Activated CD4-positive, alpha-beta memory T cell treated with anti-CD3 and anti-CD28 coated beads, Interleukin-2, amount 10 ng/mL, durations not matched to agents 7 days and 5 days (primary cell): ENCODE measurements at regions of chr3 and their contacts with region 1.

Region 1: DNA sequence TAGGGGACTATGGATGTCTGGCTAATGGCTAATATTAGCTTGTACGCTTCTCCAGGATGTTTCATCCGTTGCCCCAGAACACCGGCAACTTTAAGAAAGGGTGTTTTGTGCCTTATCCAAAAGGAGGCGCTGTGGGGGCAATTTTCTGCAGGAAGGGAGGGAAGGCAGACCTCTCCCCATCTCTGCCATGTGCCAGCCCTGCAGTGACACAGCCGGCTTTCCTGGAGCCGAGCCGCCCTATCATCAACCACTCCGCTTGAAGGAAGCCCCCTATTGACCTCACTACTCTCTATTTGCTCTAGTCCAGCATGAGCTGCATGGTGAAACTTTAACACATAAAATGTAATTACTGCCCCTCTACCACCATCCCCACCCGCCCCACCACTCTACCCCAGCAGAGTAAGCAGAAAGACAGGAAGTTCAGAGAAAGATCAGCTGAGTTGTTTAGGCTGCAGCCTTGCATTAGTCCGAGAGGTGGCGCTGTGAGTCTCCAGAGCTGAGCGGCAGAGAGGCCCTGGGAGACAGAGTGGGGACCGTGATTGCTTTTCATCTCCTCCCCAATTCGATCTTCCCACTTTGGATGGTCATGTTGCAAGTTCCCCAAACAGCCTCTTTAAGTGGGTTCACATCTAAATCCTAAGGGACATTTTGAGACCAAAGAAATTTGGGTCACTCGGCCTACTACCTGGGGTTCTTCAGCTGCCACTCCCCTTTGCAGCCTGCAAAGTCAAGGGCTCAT is 24.5 kb upstream of the RAD18 start:
- DNase-seq: peak; percentile 70
- H3K4me3 Mint-ChIP-seq: no peak overlapping the region
- H3K27ac Mint-ChIP-seq: no peak overlapping the region
- H3K4me1 Mint-ChIP-seq: peaks cover 2% of the 10 kb centered on the region
- H3K27me3 Mint-ChIP-seq: peaks cover 2% of the 10 kb centered on the region

Region 2: GRCh38 chr3:8793242-8793641 is 194.6 kb before region 1 on chr3:
- CTCF ChIA-PET with region 1: no interaction called
- POLR2A ChIA-PET with region 1: no interaction called
- DNase-seq: no peak
- H3K4me3 Mint-ChIP-seq: no peak overlapping the region
- H3K27ac Mint-ChIP-seq: no peak overlapping the region
- H3K4me1 Mint-ChIP-seq: no peaks in the 10 kb centered on the region
- H3K27me3 Mint-ChIP-seq: no peaks in the 10 kb centered on the region

Region 3: DNA sequence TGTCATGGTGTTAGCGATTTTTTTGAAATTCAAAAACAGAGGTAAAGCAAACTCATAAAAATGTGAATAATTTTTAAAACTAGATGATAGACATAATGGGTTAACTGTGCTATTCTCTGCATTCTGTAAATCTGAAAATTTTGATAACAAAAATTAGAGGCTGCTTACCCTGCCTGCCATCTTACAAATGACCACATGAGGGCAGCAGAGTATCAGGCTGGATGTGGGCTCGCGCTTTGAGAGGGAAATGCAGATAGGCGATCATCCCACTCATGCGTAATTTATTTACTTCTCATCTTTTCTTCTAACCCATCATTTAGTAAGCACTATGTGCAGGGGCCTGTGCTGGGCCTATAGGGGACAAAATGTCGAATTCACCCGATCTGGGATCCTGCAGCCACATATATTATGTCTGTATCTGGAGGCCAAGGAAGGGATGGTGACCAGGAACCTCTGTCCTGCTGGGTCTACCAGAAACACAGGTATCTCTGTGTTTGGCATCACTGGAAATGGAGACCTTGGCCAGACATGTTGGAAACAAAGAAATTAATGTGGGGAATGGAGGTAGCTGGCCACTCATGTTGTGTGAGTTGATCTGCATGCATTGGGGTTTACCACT is 16.7 kb before region 1 on chr3:
- CTCF ChIA-PET with region 1: interaction called, 15 read pairs
- POLR2A ChIA-PET with region 1: no interaction called
- DNase-seq: peak; percentile 75
- H3K4me3 Mint-ChIP-seq: no peak overlapping the region
- H3K27ac Mint-ChIP-seq: no peak overlapping the region
- H3K4me1 Mint-ChIP-seq: peaks cover 3% of the 10 kb centered on the region
- H3K27me3 Mint-ChIP-seq: peaks cover 8% of the 10 kb centered on the region

Region 4: DNA sequence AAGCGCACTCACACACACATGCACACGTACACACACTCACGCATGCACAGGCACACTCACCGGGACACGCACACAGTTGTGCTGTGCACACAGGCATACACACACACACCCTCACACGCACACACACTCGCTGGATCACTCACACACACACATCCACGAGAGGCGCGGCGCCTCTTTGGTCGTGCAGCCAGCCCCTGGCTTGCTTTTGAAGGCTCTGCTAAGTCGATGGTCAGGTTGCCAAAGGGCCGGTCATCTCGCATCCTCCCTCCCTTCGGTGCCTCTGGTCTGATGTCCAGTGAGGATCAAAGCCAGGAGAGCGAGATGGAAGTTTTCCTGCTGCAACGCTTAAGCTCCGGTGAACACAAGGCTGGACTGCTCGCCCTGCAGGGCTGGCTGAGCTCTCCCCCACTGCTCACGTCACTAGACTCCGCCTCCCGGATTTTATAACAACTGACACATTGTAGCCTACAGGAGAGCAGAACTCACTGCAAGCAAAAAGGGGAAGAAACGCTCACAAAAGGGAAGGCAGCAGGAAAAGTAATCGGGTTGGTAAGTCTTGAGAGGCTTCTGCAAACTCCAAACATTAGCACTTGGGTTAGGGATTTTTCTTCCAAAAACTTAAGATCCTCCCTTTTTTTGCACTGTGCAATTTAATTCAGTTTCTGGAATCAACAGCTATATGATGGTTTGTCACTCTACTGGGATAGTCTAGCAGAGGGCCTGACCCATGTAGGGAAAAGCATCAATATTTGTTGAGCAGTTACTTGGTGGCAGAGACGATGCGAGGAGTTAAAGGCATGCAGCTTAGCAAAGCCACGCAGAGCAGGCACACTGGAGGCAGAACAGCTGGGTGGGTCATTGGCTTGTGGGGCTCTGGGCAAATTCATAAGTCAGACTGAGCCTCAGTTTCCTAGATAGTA is 261.7 kb after region 1 on chr3 and contains the start of gene SRGAP3:
- CTCF ChIA-PET with region 1: interaction called, 10 read pairs
- POLR2A ChIA-PET with region 1: no interaction called
- DNase-seq: peak; percentile 75
- H3K4me3 Mint-ChIP-seq: peak within 1 kb of the TSS; percentile 59
- H3K27ac Mint-ChIP-seq: no peak within 1 kb of the TSS
- H3K4me1 Mint-ChIP-seq: peaks cover 20% of the 10 kb centered on the region
- H3K27me3 Mint-ChIP-seq: peaks cover 29% of the 10 kb centered on the region
- total RNA-seq, gene SRGAP3: 1.2 to 1.3 TPM

Region 5: DNA sequence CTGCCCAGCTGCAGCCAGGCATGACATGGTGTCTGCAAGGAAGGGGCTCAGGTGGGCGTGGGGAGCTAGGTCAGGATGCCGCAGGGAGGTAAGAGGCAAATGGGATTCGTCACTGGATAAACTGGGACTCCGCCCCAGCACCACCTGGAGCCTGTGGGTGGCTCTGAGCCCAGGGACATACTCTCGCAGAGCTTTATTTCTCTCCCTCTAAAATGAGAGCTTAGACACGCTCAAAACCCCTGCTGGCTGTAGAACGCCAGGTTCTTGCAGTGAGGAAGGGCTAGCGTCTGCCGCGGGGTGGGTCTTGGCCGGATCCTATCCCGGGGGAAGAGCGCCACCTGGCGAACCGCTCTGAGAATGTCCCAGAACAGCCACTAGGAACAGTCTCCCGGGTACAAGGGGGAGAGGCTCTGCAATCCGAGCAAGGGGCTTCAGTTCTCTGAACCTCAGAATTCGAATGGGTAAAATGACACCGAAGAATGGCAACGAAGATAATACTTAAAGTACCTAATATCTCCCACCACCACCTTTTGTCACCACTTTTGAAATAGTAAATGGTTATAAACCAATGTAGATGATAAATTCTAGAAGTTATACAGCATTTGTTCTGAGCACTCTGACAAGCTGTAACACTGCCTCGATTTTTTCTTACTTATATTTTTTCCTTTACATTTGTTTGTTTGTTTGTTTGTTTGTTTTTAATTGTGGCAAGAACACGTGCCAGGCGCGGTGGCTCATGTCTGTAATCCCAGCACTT is 314.8 kb after region 1 on chr3:
- CTCF ChIA-PET with region 1: interaction called, 67 read pairs
- POLR2A ChIA-PET with region 1: no interaction called
- DNase-seq: peak; percentile 77
- H3K4me3 Mint-ChIP-seq: peak overlapping the region; percentile 19
- H3K27ac Mint-ChIP-seq: no peak overlapping the region
- H3K4me1 Mint-ChIP-seq: peaks cover 7% of the 10 kb centered on the region
- H3K27me3 Mint-ChIP-seq: peaks cover 16% of the 10 kb centered on the region